ENCODE measurements at regions of chr9 and their contacts with region 1.

Region 1: GRCh38 chr9:21994556-21995176 is at the start of gene CDKN2B-AS1:
- DNase-seq: no peak
- H3K4me3 ChIP-seq: peak within 1 kb of the TSS; percentile 57 to 91 (median 80)
- H3K27ac ChIP-seq: no peak within 1 kb of the TSS
- H3K4me1 ChIP-seq: peaks cover 0 to 20% (median 19%) of the 10 kb centered on the region in 4 experiments
- H3K27me3 ChIP-seq: peaks cover 27 to 86% (median 58%) of the 10 kb centered on the region in 5 experiments

Region 2: DNA sequence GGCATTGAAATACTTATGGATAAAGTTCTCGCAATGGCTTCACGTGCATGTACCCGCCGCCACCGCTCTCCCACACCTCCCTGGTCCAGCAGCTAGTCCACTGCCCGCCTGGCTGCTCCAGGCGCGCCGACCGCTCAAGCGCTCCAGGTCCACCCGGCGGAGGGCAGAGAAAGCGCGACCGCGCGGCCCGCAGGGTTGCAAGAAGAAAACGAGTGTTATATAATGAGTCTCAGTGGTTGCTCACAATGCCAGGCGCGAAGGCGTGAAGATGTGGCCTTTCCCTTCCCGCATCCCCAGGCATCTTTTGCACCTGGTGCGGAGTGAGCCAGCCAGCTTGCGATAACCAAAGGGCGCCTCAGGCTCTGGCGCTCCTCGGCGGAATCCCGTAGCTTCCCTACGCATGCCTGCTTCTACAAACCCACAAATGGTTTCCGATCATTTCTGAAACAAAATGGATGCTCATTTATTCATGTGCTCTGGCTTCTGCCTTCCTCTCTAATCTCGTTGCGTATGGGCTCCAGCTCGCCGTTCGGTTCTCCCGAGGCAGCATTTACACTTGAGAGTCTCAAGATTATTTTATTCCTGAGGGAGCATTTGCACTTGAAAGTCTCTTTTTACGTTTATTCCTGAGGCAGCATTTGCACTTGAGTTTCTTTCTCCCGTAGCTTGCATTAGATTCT is 26.2 kb before region 1 on chr9:
- CTCF ChIA-PET with region 1: interaction called, 10 read pairs
- POLR2A ChIA-PET with region 1: no interaction called
- DNase-seq: peak in 1 of 3 donors; percentile 41
- H3K4me3 ChIP-seq: no peak overlapping the region
- H3K27ac ChIP-seq: no peak overlapping the region
- H3K4me1 ChIP-seq: peaks cover 0 to 28% (median 15%) of the 10 kb centered on the region in 4 experiments
- H3K27me3 ChIP-seq: peaks cover 40 to 99% (median 66%) of the 10 kb centered on the region in 5 experiments

Region 3: DNA sequence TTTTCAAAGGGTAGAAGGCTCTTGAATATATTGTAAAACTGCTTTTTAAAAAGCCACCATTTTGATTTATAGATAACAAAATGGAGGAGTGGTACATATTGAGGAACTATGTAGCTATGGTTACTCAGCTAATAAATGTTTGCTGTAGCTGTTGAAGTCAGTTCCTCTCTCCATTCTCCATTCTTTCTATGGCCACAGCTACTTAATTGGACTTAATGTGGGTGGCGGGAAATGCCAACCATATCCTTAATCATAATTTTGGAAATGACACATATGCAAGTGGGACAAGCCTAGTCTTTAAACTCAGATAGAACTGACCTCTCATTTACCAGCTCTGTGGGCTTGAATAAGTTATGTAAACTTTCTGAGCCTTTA is 11.1 kb before region 1 on chr9:
- CTCF ChIA-PET with region 1: no interaction called
- POLR2A ChIA-PET with region 1: no interaction called
- DNase-seq: peak in 1 of 3 donors; percentile 24
- H3K4me3 ChIP-seq: no peak overlapping the region
- H3K27ac ChIP-seq: no peak overlapping the region
- H3K4me1 ChIP-seq: no peaks in the 10 kb centered on the region
- H3K27me3 ChIP-seq: peaks cover 15 to 90% (median 52%) of the 10 kb centered on the region in 5 experiments

Region 4: GRCh38 chr9:22008736-22009562 is 14.3 kb after region 1 on chr9 and contains the start of gene CDKN2B:
- CTCF ChIA-PET with region 1: interaction called, 15 read pairs
- POLR2A ChIA-PET with region 1: no interaction called
- DNase-seq: no peak
- H3K4me3 ChIP-seq: peak within 1 kb of the TSS in 6 of 7 experiments; percentile 19 to 68 (median 50)
- H3K27ac ChIP-seq: no peak within 1 kb of the TSS
- H3K4me1 ChIP-seq: peaks cover 0 to 21% (median 14%) of the 10 kb centered on the region in 4 experiments
- H3K27me3 ChIP-seq: peaks cover 28 to 95% (median 53%) of the 10 kb centered on the region in 5 experiments